Dorsolateral prefrontal cortex (tissue), 120 donors: ENCODE measurements at regions of chr10 and their contacts with region 1.

Region 1: DNA sequence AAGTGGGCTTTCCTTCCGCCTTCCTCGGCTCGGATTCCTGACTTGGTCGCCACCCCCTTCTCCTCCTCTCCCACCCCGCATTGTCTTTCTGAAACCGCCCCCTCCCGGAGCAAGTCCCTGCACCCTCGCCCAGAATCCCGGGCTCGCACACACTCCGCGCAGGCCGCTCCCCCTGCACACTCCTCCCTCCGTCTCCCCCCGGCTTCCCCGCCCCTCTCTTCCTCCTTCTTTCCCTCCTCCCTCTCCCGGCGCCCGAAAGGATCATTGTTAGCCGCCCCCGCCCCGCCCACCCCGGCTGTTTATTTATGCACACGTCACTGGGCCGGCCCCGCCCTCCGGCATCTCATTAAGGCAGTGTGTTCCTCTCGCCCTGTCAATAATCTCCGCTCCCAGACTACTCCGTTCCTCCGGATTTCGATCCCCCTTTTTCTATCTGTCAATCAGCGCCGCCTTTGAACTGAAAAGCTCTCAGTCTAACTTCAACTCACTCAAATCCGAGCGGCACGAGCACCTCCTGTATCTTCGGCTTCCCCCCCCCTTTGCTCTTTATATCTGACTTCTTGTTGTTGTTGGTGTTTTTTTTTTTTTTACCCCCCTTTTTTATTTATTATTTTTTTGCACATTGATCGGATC is at the start of gene TCF7L2:
- DNase-seq: peak; percentile 38 to 95 (median 91)
- H3K4me3 ChIP-seq: peak within 1 kb of the TSS; percentile 26 to 86 (median 73)
- H3K27ac ChIP-seq: peak within 1 kb of the TSS in 55 of 59 donors; percentile 23 to 92 (median 76)
- H3K27me3 ChIP-seq: no peaks in the 10 kb centered on the region
- CTCF ChIP-seq: no peak
- total RNA-seq, gene TCF7L2: 15.8 to 51.9 (median 27.4) TPM

Region 2: GRCh38 chr10:112815269-112816032 is 134.5 kb before region 1 on chr10:
- intact Hi-C with region 1: no loop called
- DNase-seq: no peak
- H3K4me3 ChIP-seq: no peak overlapping the region
- H3K27ac ChIP-seq: no peak overlapping the region
- H3K27me3 ChIP-seq: no peaks in the 10 kb centered on the region
- CTCF ChIP-seq: no peak

Region 3: GRCh38 chr10:112985690-112986543 is 35.9 kb after region 1 on chr10:
- intact Hi-C with region 1: loop called in 1 of 2 experiments (anchors 5 kb)
- DNase-seq: no peak
- H3K4me3 ChIP-seq: no peak overlapping the region
- H3K27ac ChIP-seq: no peak overlapping the region
- H3K27me3 ChIP-seq: no peaks in the 10 kb centered on the region
- CTCF ChIP-seq: no peak

Region 4: DNA sequence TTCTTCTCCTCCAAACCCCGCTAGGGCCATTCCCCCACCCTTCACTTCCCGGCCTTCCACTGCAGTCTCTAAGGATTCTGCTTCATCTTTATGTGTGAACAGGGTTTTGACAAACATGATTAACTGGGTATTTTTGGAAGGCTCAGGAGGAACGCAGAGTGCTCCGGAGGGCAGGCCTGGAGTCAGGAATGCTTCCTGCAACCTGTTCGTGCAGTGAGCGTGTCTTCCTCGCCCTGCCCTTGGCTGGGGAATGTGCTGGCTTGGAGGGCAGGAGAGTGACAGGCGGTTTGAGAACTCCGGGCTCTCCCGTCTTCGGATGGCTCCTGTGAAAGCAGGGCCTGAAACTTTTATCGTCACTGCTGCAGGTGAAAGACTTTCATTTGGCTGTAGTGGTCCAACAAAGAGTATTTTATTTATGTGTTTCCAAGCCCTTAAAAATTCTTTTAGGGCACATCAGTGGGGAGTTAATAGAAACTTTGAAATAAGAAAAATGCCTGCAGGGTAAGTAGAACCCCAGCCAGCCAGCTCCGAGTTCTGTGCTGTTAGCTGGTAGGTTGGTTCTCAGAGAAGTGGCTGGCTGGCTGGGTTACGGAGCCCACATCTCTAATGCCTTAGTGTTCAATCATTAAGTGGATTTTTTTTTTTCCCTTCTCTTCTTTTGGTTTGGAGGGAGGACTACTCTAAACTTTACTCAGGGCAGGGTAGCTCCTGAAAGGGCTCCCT is 51.0 kb after region 1 on chr10:
- intact Hi-C with region 1: loop called in 1 of 2 experiments (anchors 5 kb)
- DNase-seq: no peak
- H3K4me3 ChIP-seq: no peak overlapping the region
- H3K27ac ChIP-seq: peak overlapping the region in 35 of 59 donors; percentile 1 to 94 (median 44)
- H3K27me3 ChIP-seq: no peaks in the 10 kb centered on the region
- CTCF ChIP-seq: no peak

Region 5: GRCh38 chr10:113108212-113108835 is 158.3 kb after region 1 on chr10:
- intact Hi-C with region 1: loop called in 1 of 2 experiments (anchors 10 kb)
- DNase-seq: peak in 4 of 10 donors; percentile 25 to 67 (median 48)
- H3K4me3 ChIP-seq: no peak overlapping the region
- H3K27ac ChIP-seq: no peak overlapping the region
- H3K27me3 ChIP-seq: no peaks in the 10 kb centered on the region
- CTCF ChIP-seq: peak; percentile 13 to 79 (median 61)

Region 6: GRCh38 chr10:113441220-113441619 is 491.2 kb after region 1 on chr10:
- intact Hi-C with region 1: no loop called
- DNase-seq: no peak
- H3K4me3 ChIP-seq: no peak overlapping the region
- H3K27ac ChIP-seq: no peak overlapping the region
- H3K27me3 ChIP-seq: peaks cover 0 to 10% (median 0%) of the 10 kb centered on the region in 45 donors
- CTCF ChIP-seq: peak in 13 of 56 donors; percentile 8 to 48 (median 27)